HCT116 (cell line): ENCODE measurements at regions of chr6 and their contacts with region 1.

Region 1: DNA sequence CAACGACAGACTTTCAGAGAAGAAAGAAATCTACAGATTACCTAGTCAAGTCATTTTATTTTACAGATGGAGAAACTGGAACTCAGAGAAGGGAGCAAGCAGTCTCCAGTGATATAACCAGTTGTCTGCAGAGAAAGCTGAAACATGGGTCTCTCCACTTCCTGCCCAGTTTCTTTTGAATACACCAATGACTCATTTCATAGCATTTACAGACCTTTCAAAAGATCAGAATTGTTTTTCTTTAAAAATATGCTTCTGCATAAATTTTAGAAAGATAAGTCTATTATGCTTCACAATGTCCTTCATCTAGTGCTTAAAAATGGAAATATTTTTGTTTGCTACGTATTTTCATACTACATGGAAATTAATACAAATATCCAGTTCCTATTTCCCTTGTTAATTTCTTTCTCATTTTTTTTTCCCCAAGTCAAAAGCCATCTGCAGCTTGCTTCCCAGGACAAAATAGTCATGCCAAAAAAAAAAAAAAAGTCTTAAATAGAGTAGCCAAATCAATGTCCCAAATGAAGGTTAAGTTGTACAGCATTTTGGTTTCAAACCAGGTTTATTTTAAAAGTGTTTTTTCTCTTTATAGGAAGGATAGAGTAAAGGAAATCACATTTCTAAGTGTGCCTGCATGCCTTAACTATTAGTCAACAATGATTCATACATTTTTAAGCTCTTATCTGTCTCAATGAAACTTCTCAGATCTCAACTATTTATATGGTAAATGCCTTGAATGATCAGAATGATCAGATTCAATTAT is 36.9 kb downstream of the ARHGAP18 start:
- DNase-seq: peak; percentile 80
- ATAC-seq: peak; percentile 71
- H3K4me3 ChIP-seq: peak overlapping the region in 1 of 2 experiments; percentile 42; a peak in 2 of 4 replicates
- H3K27ac ChIP-seq: peak overlapping the region; percentile 97
- H3K4me1 ChIP-seq: peaks cover 88 to 90% of the 10 kb centered on the region in 2 experiments
- H3K27me3 ChIP-seq: no peaks in the 10 kb centered on the region
- CTCF ChIP-seq: no peak
- POLR2A ChIP-seq: no peak
- RAD21 ChIP-seq: peak; percentile 11; the same call in 1 of the 2 replicates

Region 2: GRCh38 chr6:129730477-129731165 is 57.6 kb after region 1 on chr6:
- CTCF ChIA-PET with region 1: interaction called, 11 read pairs
- POLR2A ChIA-PET with region 1: interaction called, 7 read pairs
- RAD21 ChIA-PET with region 1: no interaction called
- intact Hi-C with region 1: loop called (anchors 1 kb)
- DNase-seq: no peak
- ATAC-seq: peak; percentile 62
- H3K4me3 ChIP-seq: no peak overlapping the region
- H3K27ac ChIP-seq: peak overlapping the region; percentile 52
- H3K4me1 ChIP-seq: peaks cover 27 to 38% of the 10 kb centered on the region in 2 experiments
- H3K27me3 ChIP-seq: no peaks in the 10 kb centered on the region
- CTCF ChIP-seq: peak; percentile 60 to 85 (median 71)
- POLR2A ChIP-seq: no peak
- RAD21 ChIP-seq: peak; percentile 96

Region 3: GRCh38 chr6:130625825-130626527 is 952.9 kb after region 1 on chr6:
- CTCF ChIA-PET with region 1: no interaction called
- POLR2A ChIA-PET with region 1: no interaction called
- RAD21 ChIA-PET with region 1: no interaction called
- intact Hi-C with region 1: no loop called
- DNase-seq: peak; percentile 71
- ATAC-seq: peak; percentile 94
- H3K4me3 ChIP-seq: peak overlapping the region in 1 of 2 experiments; percentile 12; a peak in 1 of 4 replicates
- H3K27ac ChIP-seq: peak overlapping the region; percentile 79
- H3K4me1 ChIP-seq: peaks cover 14 to 24% of the 10 kb centered on the region in 2 experiments
- H3K27me3 ChIP-seq: no peaks in the 10 kb centered on the region
- CTCF ChIP-seq: no peak
- POLR2A ChIP-seq: no peak
- RAD21 ChIP-seq: no peak